ENCODE measurements at regions of chr3 and their contacts with region 1.

Region 1: DNA sequence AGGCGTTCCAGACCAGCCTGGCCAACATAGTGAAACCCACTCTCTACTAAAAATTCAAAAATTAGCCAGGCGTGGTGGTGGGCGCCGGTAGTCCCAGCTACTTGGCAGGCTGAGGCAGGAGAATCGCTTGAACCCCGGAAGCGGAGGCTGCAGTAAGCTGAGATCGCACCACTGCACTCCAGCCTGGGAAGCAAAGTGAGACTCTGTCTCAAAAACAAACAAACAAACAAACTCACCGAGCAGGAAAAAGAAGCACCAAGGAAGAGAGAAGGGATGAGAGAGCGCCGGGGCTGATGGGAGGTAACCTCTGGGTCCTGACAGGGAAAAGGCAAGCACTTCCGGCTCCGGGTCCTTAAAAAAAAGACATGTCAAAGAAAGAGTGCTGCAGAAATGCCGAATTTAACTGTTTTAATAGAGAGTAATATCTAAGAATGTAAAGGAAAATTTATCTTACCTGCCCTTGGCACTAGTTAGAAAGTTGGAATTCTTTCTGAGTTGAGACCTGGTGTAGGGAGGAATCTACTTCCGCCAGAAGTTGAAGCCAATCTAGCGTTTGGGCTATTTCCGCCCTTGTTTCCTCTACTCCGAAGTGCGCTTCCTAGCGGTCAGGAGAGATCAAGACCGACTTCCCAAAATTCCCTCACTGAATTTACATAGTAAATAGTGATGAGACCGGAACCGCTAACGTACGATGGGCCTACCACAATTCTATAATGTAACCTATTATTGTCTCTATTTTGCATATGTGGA is 29.1 kb downstream of the EFCAB12 start:
- DNase-seq: peak; percentile 79 to 92 (median 81)
- ATAC-seq: peak; percentile 86
- H3K4me3 ChIP-seq: peak overlapping the region; percentile 73
- H3K27ac ChIP-seq: peak overlapping the region; percentile 87
- H3K4me1 ChIP-seq: peaks cover 0 to 7% of the 10 kb centered on the region in 2 experiments; a peak in 4 of 5 replicates
- H3K27me3 ChIP-seq: no peaks in the 10 kb centered on the region
- CTCF ChIP-seq: peak; percentile 56 to 73 (median 71)
- EP300 ChIP-seq: no peak
- POLR2A ChIP-seq: no peak; the same call in 1 of the 2 replicates
- RAD21 ChIP-seq: no peak

Region 2: DNA sequence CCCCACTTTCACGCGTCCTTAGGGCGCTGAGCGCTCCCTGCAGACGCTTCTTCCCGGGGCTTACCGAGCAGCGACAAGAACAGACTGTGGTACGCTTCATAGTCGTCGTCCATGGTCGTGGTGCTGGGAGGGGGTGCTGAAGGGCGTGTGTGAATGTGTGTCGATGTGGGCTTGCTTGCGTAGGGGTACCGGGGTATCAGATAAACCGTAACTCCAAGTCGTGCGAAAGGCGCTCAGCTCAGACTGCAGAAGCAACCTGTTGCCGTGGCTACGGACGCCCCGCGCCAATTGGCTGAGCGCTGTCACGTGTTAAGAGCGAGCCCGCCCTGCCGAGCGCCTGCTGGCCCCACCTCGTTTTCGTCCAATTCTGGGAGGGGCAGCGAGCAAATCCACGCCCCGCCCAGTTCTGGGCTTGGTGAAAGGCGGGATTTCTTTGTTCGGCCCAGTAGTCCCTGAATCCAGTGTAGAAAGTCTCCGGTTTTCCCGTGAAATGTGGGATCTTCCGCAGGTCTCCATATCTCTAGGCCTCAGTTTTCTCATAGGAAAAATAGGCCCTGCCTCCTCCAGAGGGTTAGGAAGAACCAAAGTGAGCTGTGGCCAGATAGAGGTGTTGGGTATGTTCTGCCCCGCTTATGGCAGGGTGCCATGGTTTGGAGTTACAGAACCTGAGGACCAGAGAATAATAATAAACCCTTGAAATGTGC is 29.2 kb after region 1 on chr3 and contains the start of gene EFCAB12:
- CTCF ChIA-PET with region 1: no interaction called
- POLR2A ChIA-PET with region 1: interaction called, 12 read pairs
- in situ Hi-C with region 1: no loop called
- intact Hi-C with region 1: no loop called
- DNase-seq: peak; percentile 91 to 95 (median 92)
- ATAC-seq: peak; percentile 97
- H3K4me3 ChIP-seq: peak within 1 kb of the TSS; percentile 41
- H3K27ac ChIP-seq: peak within 1 kb of the TSS; percentile 64
- H3K4me1 ChIP-seq: peaks cover 27 to 35% of the 10 kb centered on the region in 2 experiments; a peak in 4 of 5 replicates
- H3K27me3 ChIP-seq: no peaks in the 10 kb centered on the region
- CTCF ChIP-seq: no peak; a peak in 1 of 6 replicates
- EP300 ChIP-seq: no peak
- POLR2A ChIP-seq: peak; percentile 49; the same call in 1 of the 2 replicates
- RAD21 ChIP-seq: no peak; a peak in 1 of 4 replicates
- polyA plus RNA-seq, gene EFCAB12: 0.08 TPM in 1 of 2 experiments, not detected in the other